ENCODE measurements at regions of chr6 and their contacts with region 1.

Region 1: GRCh38 chr6:166419286-166419685 is 36.5 kb upstream of the MPC1 start:
- DNase-seq: peak; percentile 45 to 82 (median 53)
- H3K4me3 ChIP-seq: no peak overlapping the region
- H3K4me3 Mint-ChIP-seq: peak overlapping the region in 7 of 8 donors; percentile 55 to 79 (median 70)
- H3K27ac ChIP-seq: peak overlapping the region; percentile 42
- H3K27ac Mint-ChIP-seq: peak overlapping the region; percentile 96 to 99 (median 98)
- H3K4me1 ChIP-seq: peaks cover 74% of the 10 kb centered on the region
- H3K4me1 Mint-ChIP-seq: peaks cover 55 to 74% (median 68%) of the 10 kb centered on the region in 4 donors
- H3K27me3 ChIP-seq: no peaks in the 10 kb centered on the region
- H3K27me3 Mint-ChIP-seq: peaks cover 0 to 4% of the 10 kb centered on the region in 2 donors

Region 2: GRCh38 chr6:166435574-166435973 is 16.3 kb after region 1 on chr6:
- CTCF ChIA-PET with region 1: interaction called, 21 read pairs
- POLR2A ChIA-PET with region 1: interaction called, 11 read pairs
- intact Hi-C with region 1: loop called (anchors 2 kb)
- DNase-seq: peak; percentile 26 to 58 (median 43)
- H3K4me3 ChIP-seq: no peak overlapping the region
- H3K4me3 Mint-ChIP-seq: peak overlapping the region in 3 of 8 donors; percentile 26 to 83 (median 36)
- H3K27ac ChIP-seq: no peak overlapping the region
- H3K27ac Mint-ChIP-seq: peak overlapping the region in 6 of 7 donors; percentile 9 to 89 (median 72)
- H3K4me1 ChIP-seq: peaks cover 23% of the 10 kb centered on the region
- H3K4me1 Mint-ChIP-seq: peaks cover 16 to 33% (median 26%) of the 10 kb centered on the region in 4 donors
- H3K27me3 ChIP-seq: no peaks in the 10 kb centered on the region
- H3K27me3 Mint-ChIP-seq: no peaks in the 10 kb centered on the region